PC-9 (cell line): ENCODE measurements at regions of chr2 and their contacts with region 1.

Region 1: DNA sequence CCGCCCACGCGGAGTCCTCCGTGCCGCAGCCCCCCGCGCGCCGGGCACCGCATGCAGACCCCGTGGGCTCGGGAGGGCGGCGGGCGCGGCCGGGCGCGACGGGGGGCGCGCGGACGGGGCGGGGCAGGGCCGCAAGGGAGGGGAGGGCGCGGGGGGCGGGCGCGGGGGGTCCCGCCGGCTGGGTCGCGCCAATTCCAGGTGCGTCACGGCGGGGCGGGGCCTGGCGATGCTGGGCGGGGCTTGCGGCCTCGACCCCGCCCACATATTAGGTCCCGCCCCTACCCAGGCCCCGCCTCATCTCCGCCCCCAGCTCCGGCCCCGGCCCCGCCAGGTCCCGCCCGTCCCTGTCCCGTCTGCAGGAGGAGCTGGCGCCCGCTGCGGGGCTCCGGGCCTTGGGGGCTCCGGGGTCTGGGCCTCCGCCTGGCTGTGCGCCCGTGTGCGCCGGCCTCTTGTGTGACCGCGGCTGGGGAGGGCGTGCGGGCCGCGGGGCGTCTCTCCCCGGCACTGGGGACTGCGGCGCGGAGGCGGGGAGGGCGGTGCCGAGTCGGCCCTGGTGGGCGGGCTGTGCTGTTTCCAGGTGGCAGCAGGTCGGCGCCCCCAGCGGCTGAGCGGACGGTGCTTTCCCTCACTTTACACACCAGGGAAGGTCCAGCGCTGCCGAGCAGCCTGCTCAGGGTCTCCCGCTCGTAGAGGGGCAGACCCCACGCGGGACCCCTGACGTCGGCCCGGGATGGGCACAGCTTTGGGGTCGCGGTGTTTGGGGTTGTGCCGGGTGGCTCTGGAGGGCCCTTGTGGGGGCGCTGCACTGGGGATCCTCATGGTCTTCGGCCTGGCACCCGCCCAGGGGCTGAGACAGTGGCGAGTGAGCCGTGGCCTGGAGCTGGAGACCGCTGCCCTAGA is 543 bp downstream of the ING5 start:
- DNase-seq: peak; percentile 81 to 97
- H3K4me3 ChIP-seq: peak overlapping the region; percentile 99
- H3K27ac ChIP-seq: peak overlapping the region; percentile 89; the same call in 1 of the 2 replicates
- H3K4me1 ChIP-seq: peaks cover 18% of the 10 kb centered on the region
- H3K27me3 ChIP-seq: no peaks in the 10 kb centered on the region
- CTCF ChIP-seq: peak; percentile 66

Region 2: GRCh38 chr2:241469746-241470145 is 232.6 kb before region 1 on chr2:
- CTCF ChIA-PET with region 1: no interaction called
- POLR2A ChIA-PET with region 1: no interaction called
- intact Hi-C with region 1: no loop called
- DNase-seq: no peak
- H3K4me3 ChIP-seq: no peak overlapping the region
- H3K27ac ChIP-seq: no peak overlapping the region
- H3K4me1 ChIP-seq: no peaks in the 10 kb centered on the region
- H3K27me3 ChIP-seq: no peaks in the 10 kb centered on the region
- CTCF ChIP-seq: no peak

Region 3: GRCh38 chr2:241540771-241541561 is 161.4 kb before region 1 on chr2:
- CTCF ChIA-PET with region 1: no interaction called
- POLR2A ChIA-PET with region 1: no interaction called
- intact Hi-C with region 1: loop called (anchors 10 kb)
- DNase-seq: peak in 1 of 2 experiments; percentile 85
- H3K4me3 ChIP-seq: peak overlapping the region; percentile 54; the same call in 1 of the 2 replicates
- H3K27ac ChIP-seq: no peak overlapping the region
- H3K4me1 ChIP-seq: no peaks in the 10 kb centered on the region; the same call in 1 of the 2 replicates
- H3K27me3 ChIP-seq: no peaks in the 10 kb centered on the region
- CTCF ChIP-seq: no peak

Region 4: GRCh38 chr2:241720099-241720498 is 17.7 kb after region 1 on chr2:
- CTCF ChIA-PET with region 1: no interaction called
- POLR2A ChIA-PET with region 1: interaction called, 33 read pairs
- intact Hi-C with region 1: no loop called
- DNase-seq: no peak
- H3K4me3 ChIP-seq: no peak overlapping the region
- H3K27ac ChIP-seq: no peak overlapping the region
- H3K4me1 ChIP-seq: no peaks in the 10 kb centered on the region
- H3K27me3 ChIP-seq: no peaks in the 10 kb centered on the region
- CTCF ChIP-seq: no peak

Region 5: DNA sequence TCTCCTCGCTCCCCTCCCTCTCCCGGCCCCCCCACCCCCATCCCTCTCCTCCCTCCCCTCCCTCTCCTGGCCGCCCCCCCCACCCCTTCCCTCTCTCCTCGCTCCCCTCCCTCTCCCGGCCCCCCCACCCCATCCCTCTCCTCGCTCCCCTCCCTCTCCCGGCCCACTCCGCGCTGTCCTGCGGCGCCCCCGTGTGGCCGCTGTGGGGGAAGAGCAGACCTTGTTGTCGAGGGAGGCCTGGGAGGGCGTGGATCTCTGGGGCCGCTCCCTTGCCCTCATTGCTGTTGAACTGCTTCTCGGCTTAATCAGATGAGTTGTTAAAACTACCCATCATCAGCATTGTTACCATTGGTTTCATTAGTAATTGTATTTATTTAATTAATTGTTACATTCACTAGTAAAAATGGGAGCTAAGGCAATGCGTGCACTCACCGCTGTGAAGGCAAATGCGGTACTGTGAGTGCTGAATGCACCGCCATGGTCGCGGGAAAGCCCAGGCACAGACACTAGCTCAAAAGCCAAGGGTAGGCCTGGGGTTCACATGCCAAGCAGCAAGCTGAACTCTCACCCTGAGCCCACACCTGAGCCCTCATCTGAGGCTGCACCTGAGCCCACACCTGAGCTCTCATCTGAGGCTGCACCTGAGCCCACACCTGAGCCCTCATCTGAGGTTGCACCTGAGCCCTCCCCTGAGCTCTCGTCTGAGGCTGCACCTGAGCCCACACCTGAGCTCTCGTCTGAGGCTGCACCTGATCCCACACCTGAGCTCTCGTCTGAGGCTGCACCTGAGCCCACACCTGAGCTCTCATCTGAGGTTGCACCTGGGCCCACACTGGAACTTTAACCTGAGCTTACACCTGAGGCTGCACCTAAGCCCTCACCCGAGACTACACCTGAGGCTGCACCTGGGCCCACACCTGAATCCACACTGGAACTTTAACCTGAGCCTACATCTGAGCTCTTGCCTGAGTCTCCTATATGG is 175.9 kb after region 1 on chr2:
- CTCF ChIA-PET with region 1: interaction called, 8 read pairs
- POLR2A ChIA-PET with region 1: no interaction called
- intact Hi-C with region 1: loop called (anchors 1 kb)
- DNase-seq: peak in 1 of 2 experiments; percentile 88
- H3K4me3 ChIP-seq: no peak overlapping the region
- H3K27ac ChIP-seq: no peak overlapping the region
- H3K4me1 ChIP-seq: peaks cover 5% of the 10 kb centered on the region
- H3K27me3 ChIP-seq: no peaks in the 10 kb centered on the region
- CTCF ChIP-seq: peak; percentile 79